ENCODE measurements at regions of chr6 and their contacts with region 1.

Region 1: GRCh38 chr6:134097114-134097707 is 44.8 kb upstream of the SLC2A12 start:
- DNase-seq: peak; percentile 55 to 84 (median 65)
- ATAC-seq: peak; percentile 88
- H3K4me3 ChIP-seq: no peak overlapping the region
- H3K27ac ChIP-seq: no peak overlapping the region
- H3K4me1 ChIP-seq: no peaks in the 10 kb centered on the region
- H3K27me3 ChIP-seq: no peaks in the 10 kb centered on the region; a peak in 2 of 5 replicates
- CTCF ChIP-seq: peak; percentile 70 to 86 (median 72); a peak in 5 of 6 replicates
- EP300 ChIP-seq: no peak
- POLR2A ChIP-seq: no peak
- RAD21 ChIP-seq: peak; percentile 97

Region 2: DNA sequence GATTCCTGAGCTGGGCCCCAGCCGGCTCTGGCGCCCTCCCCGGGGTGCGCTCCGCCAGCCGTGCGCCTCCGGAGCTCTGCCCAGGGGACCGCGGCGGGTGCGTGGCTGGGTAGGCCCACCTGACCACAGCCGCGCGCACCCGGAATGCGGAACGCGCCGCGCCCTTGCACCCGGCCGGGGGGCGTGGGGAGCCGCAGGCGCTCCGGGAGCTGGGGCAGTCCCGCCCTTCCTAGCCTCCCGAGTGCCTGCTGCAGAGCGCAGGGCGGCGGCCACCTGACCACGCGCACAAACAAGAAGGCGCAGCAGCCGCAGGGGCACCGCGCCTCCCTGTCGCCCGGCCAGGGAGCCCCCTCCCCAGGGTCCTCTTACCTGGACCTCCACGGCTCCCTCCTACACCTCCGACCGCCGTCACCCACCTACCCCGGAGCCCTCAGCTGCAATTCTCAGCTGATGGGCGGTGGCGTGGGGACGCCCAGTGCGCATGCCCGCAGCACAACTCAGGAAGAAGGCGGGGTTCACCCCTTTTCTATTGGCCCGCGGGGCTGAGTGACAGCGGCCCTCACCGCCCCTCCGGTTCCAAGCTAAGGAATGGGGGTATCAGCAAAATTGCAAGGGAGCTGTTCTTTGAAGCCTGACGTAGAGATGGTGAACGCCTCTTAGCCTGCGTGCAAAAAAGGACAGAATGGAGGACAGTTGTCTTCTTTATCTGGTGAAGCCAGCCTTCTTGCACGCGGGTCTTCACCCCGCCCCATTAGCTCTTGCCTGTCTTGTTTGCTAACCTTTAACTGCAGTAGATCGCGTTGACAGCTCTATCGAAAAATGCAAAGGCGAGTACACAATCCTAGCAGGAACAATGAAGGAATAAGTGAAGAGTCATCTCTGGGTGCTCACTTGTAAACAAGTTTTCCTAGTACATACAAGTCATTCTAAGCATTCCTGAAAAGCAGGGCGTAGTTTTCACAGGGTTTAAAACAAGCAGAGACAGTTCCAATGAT is 1584.3 kb before region 1 on chr6 and contains the start of gene STX7:
- CTCF ChIA-PET with region 1: no interaction called
- POLR2A ChIA-PET with region 1: no interaction called
- in situ Hi-C with region 1: loop called (anchors 25 kb)
- intact Hi-C with region 1: no loop called
- DNase-seq: peak; percentile 92 to 96 (median 94)
- ATAC-seq: peak; percentile 96
- H3K4me3 ChIP-seq: peak within 1 kb of the TSS; percentile 77
- H3K27ac ChIP-seq: peak within 1 kb of the TSS; percentile 65
- H3K4me1 ChIP-seq: peaks cover 0 to 14% of the 10 kb centered on the region in 2 experiments; a peak in 2 of 5 replicates
- H3K27me3 ChIP-seq: no peaks in the 10 kb centered on the region
- CTCF ChIP-seq: no peak
- EP300 ChIP-seq: peak; percentile 38; the same call in 1 of the 2 replicates
- POLR2A ChIP-seq: peak; percentile 79
- RAD21 ChIP-seq: no peak
- polyA plus RNA-seq, gene STX7: 13.0 to 14.6 TPM

Region 3: GRCh38 chr6:133170600-133170999 is 926.6 kb before region 1 on chr6:
- CTCF ChIA-PET with region 1: no interaction called
- POLR2A ChIA-PET with region 1: no interaction called
- in situ Hi-C with region 1: loop called (anchors 25 kb)
- intact Hi-C with region 1: no loop called
- DNase-seq: no peak
- ATAC-seq: no peak
- H3K4me3 ChIP-seq: no peak overlapping the region
- H3K27ac ChIP-seq: no peak overlapping the region
- H3K4me1 ChIP-seq: no peaks in the 10 kb centered on the region
- H3K27me3 ChIP-seq: no peaks in the 10 kb centered on the region
- CTCF ChIP-seq: no peak
- EP300 ChIP-seq: no peak
- POLR2A ChIP-seq: no peak
- RAD21 ChIP-seq: no peak

Region 4: GRCh38 chr6:133707456-133707855 is 389.8 kb before region 1 on chr6:
- CTCF ChIA-PET with region 1: no interaction called
- POLR2A ChIA-PET with region 1: no interaction called
- in situ Hi-C with region 1: no loop called
- intact Hi-C with region 1: loop called (anchors 10 kb)
- DNase-seq: no peak
- ATAC-seq: peak; percentile 58; the same call in 2 of the 3 replicates
- H3K4me3 ChIP-seq: no peak overlapping the region
- H3K27ac ChIP-seq: no peak overlapping the region
- H3K4me1 ChIP-seq: peaks cover 0 to 7% of the 10 kb centered on the region in 2 experiments; a peak in 2 of 5 replicates
- H3K27me3 ChIP-seq: no peaks in the 10 kb centered on the region; a peak in 2 of 5 replicates
- CTCF ChIP-seq: no peak
- EP300 ChIP-seq: no peak
- POLR2A ChIP-seq: no peak
- RAD21 ChIP-seq: no peak

Region 5: DNA sequence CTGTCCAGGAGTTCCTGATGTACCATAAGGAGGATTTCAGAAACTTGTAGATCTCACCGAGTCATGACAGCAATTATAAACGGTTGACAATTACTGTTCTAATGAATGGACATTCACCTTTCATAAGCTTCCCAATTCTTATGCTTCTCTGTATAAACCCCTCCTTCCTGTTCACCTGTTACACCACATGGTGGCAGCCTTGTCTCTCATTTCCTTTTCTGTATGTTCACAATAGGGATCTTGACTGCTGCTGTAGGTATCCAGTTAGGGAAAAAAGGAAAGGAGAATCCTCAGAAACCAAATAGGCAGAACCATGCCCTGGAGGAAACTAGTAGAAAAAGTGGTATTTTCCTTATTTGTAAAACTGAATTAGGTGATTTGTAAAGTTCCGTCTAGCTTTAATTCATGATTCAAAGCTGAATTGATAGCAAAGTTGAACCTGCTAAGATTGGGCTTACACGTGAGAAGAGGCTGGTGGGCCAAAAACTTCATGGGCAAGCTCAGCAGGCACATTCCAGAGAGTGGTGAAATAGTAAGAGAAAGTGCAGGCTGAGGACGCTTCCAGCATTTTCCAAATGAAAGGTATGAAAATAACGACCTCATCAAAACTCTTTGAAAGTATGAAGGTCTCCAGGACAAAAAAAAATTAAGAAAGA is 173.1 kb before region 1 on chr6:
- CTCF ChIA-PET with region 1: interaction called, 153 read pairs
- POLR2A ChIA-PET with region 1: interaction called, 13 read pairs
- in situ Hi-C with region 1: loop called (anchors 5 kb)
- intact Hi-C with region 1: loop called (anchors 1 kb)
- DNase-seq: peak; percentile 55 to 84 (median 65)
- ATAC-seq: peak; percentile 94
- H3K4me3 ChIP-seq: no peak overlapping the region
- H3K27ac ChIP-seq: no peak overlapping the region
- H3K4me1 ChIP-seq: no peaks in the 10 kb centered on the region
- H3K27me3 ChIP-seq: no peaks in the 10 kb centered on the region
- CTCF ChIP-seq: peak; percentile 77 to 95 (median 82)
- EP300 ChIP-seq: no peak
- POLR2A ChIP-seq: no peak
- RAD21 ChIP-seq: peak; percentile 99 to 100

Region 6: GRCh38 chr6:134063966-134064445 is 33.2 kb before region 1 on chr6:
- CTCF ChIA-PET with region 1: interaction called, 6 read pairs
- POLR2A ChIA-PET with region 1: interaction called, 3 read pairs
- in situ Hi-C with region 1: no loop called
- intact Hi-C with region 1: loop called (anchors 2 kb)
- DNase-seq: peak; percentile 65 to 88 (median 74)
- ATAC-seq: peak; percentile 94
- H3K4me3 ChIP-seq: no peak overlapping the region
- H3K27ac ChIP-seq: peak overlapping the region; percentile 40; the same call in 1 of the 3 replicates
- H3K4me1 ChIP-seq: peaks cover 6 to 18% of the 10 kb centered on the region in 2 experiments; a peak in 3 of 5 replicates
- H3K27me3 ChIP-seq: no peaks in the 10 kb centered on the region
- CTCF ChIP-seq: peak; percentile 90 to 99 (median 99)
- EP300 ChIP-seq: no peak
- POLR2A ChIP-seq: no peak
- RAD21 ChIP-seq: peak; percentile 76 to 89